ENCODE measurements at regions of chr5 and their contacts with region 1.

Region 1: DNA sequence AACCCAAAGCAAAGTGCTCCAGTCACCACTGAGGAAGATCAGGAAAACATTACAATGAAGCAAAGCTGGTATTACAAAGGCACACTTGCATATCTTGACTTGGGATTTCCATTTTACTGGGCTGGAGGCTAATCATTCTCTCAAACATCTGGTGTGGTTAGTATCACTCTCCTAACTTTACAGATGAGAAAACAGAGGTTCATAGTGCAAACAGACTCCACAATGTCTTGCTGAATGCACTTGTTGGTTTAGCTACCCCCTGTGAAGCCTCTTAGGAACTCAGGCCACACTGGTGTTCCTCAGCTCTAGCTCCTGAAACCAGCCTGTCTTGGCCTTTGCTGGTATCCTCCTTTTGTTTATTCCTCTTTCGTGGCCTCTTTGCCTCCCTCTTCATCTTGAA is 29.5 kb upstream of the SMAD5 start:
- DNase-seq: no peak
- ATAC-seq: peak; percentile 72
- H3K4me3 ChIP-seq: no peak overlapping the region
- H3K27ac ChIP-seq: no peak overlapping the region
- H3K4me1 ChIP-seq: no peaks in the 10 kb centered on the region
- H3K27me3 ChIP-seq: no peaks in the 10 kb centered on the region
- CTCF ChIP-seq: no peak
- EP300 ChIP-seq: no peak
- POLR2A ChIP-seq: no peak
- RAD21 ChIP-seq: no peak

Region 2: DNA sequence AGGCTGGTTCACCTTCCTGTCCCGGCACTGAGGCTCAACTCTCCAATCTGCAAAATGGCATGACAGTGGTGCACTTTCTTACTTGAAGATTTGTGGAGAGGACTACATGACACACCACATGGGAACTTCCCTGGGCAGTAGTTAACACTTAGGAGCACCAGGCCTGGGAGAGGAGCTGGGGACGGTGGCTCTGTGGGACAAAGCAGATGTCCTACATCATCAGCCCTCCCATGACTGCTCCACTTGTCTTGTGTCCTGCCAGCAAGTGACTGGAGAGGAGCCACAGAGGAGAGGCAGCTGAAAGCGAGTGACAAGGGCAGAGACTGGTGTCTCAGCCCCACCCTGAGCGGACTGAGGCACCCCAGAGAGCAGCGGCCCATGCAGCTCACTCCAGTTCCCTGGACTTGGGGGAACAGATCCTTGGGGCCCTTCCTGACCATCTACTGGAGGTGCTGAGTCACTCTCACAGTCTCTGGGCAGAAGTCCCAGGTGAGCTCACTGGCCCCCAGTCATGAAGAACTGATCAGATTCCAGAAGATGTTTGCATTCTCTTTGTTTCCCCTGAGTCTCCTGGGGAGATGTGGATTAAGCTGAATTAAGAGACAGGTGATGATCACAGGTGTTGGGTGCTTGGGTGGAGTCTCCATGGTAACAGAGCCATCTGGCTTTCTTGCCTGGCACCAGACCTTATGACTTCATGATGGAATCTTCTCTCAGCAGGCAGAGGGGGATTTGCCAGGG is 281.9 kb before region 1 on chr5:
- CTCF ChIA-PET with region 1: no interaction called
- POLR2A ChIA-PET with region 1: no interaction called
- RAD21 ChIA-PET with region 1: no interaction called
- SMC1A ChIA-PET with region 1: no interaction called
- in situ Hi-C with region 1: no loop called
- intact Hi-C with region 1: no loop called
- DNase-seq: no peak
- ATAC-seq: no peak
- H3K4me3 ChIP-seq: no peak overlapping the region
- H3K27ac ChIP-seq: no peak overlapping the region
- H3K4me1 ChIP-seq: no peaks in the 10 kb centered on the region
- H3K27me3 ChIP-seq: peaks cover 0 to 1% of the 10 kb centered on the region in 2 experiments; a peak in 2 of 4 replicates
- CTCF ChIP-seq: no peak
- EP300 ChIP-seq: no peak
- POLR2A ChIP-seq: no peak
- RAD21 ChIP-seq: no peak

Region 3: GRCh38 chr5:135993880-135994636 is 109.1 kb before region 1 on chr5:
- CTCF ChIA-PET with region 1: no interaction called
- POLR2A ChIA-PET with region 1: no interaction called
- RAD21 ChIA-PET with region 1: no interaction called
- SMC1A ChIA-PET with region 1: no interaction called
- in situ Hi-C with region 1: no loop called
- intact Hi-C with region 1: no loop called
- DNase-seq: no peak
- ATAC-seq: 0 out of 3 replicates have a peak, but pooled peaks have one; percentile 26
- H3K4me3 ChIP-seq: no peak overlapping the region
- H3K27ac ChIP-seq: no peak overlapping the region
- H3K4me1 ChIP-seq: no peaks in the 10 kb centered on the region
- H3K27me3 ChIP-seq: peaks cover 0 to 5% of the 10 kb centered on the region in 2 experiments; a peak in 3 of 4 replicates
- CTCF ChIP-seq: no peak
- EP300 ChIP-seq: no peak
- POLR2A ChIP-seq: no peak
- RAD21 ChIP-seq: no peak

Region 4: GRCh38 chr5:136073714-136074529 is 29.2 kb before region 1 on chr5:
- CTCF ChIA-PET with region 1: interaction called, 5 read pairs
- POLR2A ChIA-PET with region 1: interaction called, 3 read pairs
- RAD21 ChIA-PET with region 1: interaction called, 10 read pairs
- SMC1A ChIA-PET with region 1: interaction called, 17 read pairs
- in situ Hi-C with region 1: no loop called
- intact Hi-C with region 1: no loop called
- DNase-seq: no peak
- ATAC-seq: peak; percentile 86
- H3K4me3 ChIP-seq: no peak overlapping the region
- H3K27ac ChIP-seq: no peak overlapping the region
- H3K4me1 ChIP-seq: no peaks in the 10 kb centered on the region; the same call in 1 of the 2 replicates
- H3K27me3 ChIP-seq: no peaks in the 10 kb centered on the region; a peak in 1 of 4 replicates
- CTCF ChIP-seq: no peak
- EP300 ChIP-seq: 0 out of 4 replicates have a peak, but pooled peaks of 1 of the 2 experiments have one; percentile 44
- POLR2A ChIP-seq: no peak
- RAD21 ChIP-seq: no peak

Region 5: GRCh38 chr5:136087961-136088871 is 14.9 kb before region 1 on chr5:
- CTCF ChIA-PET with region 1: interaction called, 15 read pairs
- POLR2A ChIA-PET with region 1: interaction called, 4 read pairs
- RAD21 ChIA-PET with region 1: interaction called, 3 read pairs
- SMC1A ChIA-PET with region 1: interaction called, 16 read pairs
- in situ Hi-C with region 1: no loop called
- intact Hi-C with region 1: no loop called
- DNase-seq: no peak
- ATAC-seq: peak; percentile 49
- H3K4me3 ChIP-seq: no peak overlapping the region
- H3K27ac ChIP-seq: no peak overlapping the region
- H3K4me1 ChIP-seq: no peaks in the 10 kb centered on the region
- H3K27me3 ChIP-seq: no peaks in the 10 kb centered on the region; a peak in 1 of 4 replicates
- CTCF ChIP-seq: no peak
- EP300 ChIP-seq: no peak
- POLR2A ChIP-seq: no peak
- RAD21 ChIP-seq: no peak

Region 6: GRCh38 chr5:136115183-136115865 is 12.2 kb after region 1 on chr5:
- CTCF ChIA-PET with region 1: interaction called, 3 read pairs
- POLR2A ChIA-PET with region 1: interaction called, 3 read pairs
- RAD21 ChIA-PET with region 1: interaction called, 13 read pairs
- SMC1A ChIA-PET with region 1: interaction called, 22 read pairs
- in situ Hi-C with region 1: no loop called
- intact Hi-C with region 1: no loop called
- DNase-seq: no peak
- ATAC-seq: peak; percentile 44; the same call in 2 of the 3 replicates
- H3K4me3 ChIP-seq: no peak overlapping the region
- H3K27ac ChIP-seq: no peak overlapping the region
- H3K4me1 ChIP-seq: no peaks in the 10 kb centered on the region
- H3K27me3 ChIP-seq: peaks cover 0 to 2% of the 10 kb centered on the region in 2 experiments; a peak in 1 of 4 replicates
- CTCF ChIP-seq: no peak
- EP300 ChIP-seq: no peak
- POLR2A ChIP-seq: no peak
- RAD21 ChIP-seq: no peak

Region 7: GRCh38 chr5:136132557-136133221 is 29.6 kb after region 1 on chr5 and contains the start of gene SMAD5:
- CTCF ChIA-PET with region 1: interaction called, 4 read pairs
- POLR2A ChIA-PET with region 1: interaction called, 5 read pairs
- RAD21 ChIA-PET with region 1: interaction called, 22 read pairs
- SMC1A ChIA-PET with region 1: interaction called, 13 read pairs
- in situ Hi-C with region 1: no loop called
- intact Hi-C with region 1: no loop called
- DNase-seq: peak; percentile 65
- ATAC-seq: peak; percentile 95
- H3K4me3 ChIP-seq: peak within 1 kb of the TSS; percentile 76
- H3K27ac ChIP-seq: peak within 1 kb of the TSS; percentile 54; the same call in 1 of the 2 replicates
- H3K4me1 ChIP-seq: peaks cover 3% of the 10 kb centered on the region
- H3K27me3 ChIP-seq: peaks cover 0 to 3% of the 10 kb centered on the region in 2 experiments; a peak in 1 of 4 replicates
- CTCF ChIP-seq: no peak
- EP300 ChIP-seq: no peak
- POLR2A ChIP-seq: peak; percentile 88
- RAD21 ChIP-seq: no peak
- polyA plus RNA-seq, gene SMAD5: 3.6 to 7.1 TPM

Region 8: DNA sequence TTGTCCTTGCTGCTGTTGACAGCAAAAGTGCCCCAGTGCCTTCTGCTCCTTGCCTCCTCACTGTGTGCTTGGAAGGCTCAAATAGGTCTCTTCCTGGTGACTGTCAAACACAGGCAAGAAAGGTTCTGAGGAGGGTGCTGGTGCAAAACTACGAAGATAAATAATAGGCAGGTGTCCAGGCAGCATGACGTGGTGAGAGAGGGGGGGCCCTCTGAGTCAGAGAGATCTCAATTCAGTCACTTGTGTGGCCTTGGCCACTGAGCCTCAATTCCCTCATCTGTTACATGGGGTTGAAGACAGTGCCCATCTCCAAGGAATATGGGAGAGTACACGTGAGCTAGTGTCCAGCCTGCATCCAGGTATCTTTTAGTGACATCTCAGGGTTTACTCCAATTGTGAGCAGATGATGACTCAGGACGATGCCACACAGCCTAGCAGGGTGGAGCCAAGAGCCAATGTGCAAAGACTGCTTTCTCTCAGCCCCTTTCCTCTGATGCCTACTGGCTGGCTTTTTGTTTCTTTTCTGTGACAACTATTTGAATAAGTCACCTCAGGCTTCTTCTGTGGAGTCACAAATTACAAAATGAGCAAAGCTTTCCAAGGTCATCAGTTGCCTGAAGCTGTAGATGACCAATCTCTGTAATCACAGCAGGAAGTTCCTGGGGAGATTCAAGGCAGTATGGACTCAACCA is 119.6 kb after region 1 on chr5:
- CTCF ChIA-PET with region 1: no interaction called
- POLR2A ChIA-PET with region 1: no interaction called
- RAD21 ChIA-PET with region 1: no interaction called
- SMC1A ChIA-PET with region 1: no interaction called
- in situ Hi-C with region 1: no loop called
- intact Hi-C with region 1: no loop called
- DNase-seq: no peak
- ATAC-seq: peak; percentile 71
- H3K4me3 ChIP-seq: no peak overlapping the region
- H3K27ac ChIP-seq: no peak overlapping the region
- H3K4me1 ChIP-seq: no peaks in the 10 kb centered on the region
- H3K27me3 ChIP-seq: no peaks in the 10 kb centered on the region
- CTCF ChIP-seq: no peak
- EP300 ChIP-seq: no peak
- POLR2A ChIP-seq: no peak
- RAD21 ChIP-seq: no peak